BJ (cell line): ENCODE measurements at regions of chr10 and their contacts with region 1.

Region 1: GRCh38 chr10:29496341-29497162 is 138.2 kb downstream of the SVIL start:
- DNase-seq: no peak
- H3K4me3 ChIP-seq: no peak overlapping the region
- H3K27me3 ChIP-seq: no peaks in the 10 kb centered on the region
- CTCF ChIP-seq: peak; percentile 98

Region 2: DNA sequence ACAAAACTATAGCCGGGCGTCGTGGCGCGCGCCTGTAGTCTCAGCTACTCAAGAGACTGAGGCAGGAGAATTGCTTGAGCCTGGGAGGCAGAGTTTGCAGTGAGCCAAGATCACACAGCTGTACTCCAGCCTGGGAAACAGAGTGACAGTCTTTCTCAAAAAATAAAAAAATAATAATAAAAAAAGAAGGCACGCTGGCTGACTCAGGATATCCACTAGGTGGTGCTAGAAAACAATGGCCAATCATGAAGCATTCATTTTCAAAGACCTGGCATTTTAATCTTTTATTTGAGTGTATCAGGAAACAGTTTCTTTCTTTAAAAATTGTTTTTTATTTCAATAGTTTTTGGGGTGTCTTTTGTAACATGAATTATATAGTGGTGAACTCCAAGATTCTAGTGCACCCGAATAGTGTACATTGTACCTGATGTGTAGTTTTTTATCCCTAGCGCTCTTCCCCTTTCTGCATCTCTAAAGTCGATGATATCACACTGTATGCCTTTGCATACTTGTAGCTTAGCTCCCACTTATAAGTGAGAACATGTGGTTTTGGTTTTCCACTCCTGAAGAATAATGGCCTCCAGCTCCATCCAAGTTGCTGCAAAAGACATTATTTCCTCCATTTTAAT is 119.1 kb before region 1 on chr10:
- CTCF ChIA-PET with region 1: interaction called, 16 read pairs
- POLR2A ChIA-PET with region 1: no interaction called
- DNase-seq: no peak
- H3K4me3 ChIP-seq: no peak overlapping the region
- H3K27me3 ChIP-seq: peaks cover 4% of the 10 kb centered on the region
- CTCF ChIP-seq: peak; percentile 78

Region 3: DNA sequence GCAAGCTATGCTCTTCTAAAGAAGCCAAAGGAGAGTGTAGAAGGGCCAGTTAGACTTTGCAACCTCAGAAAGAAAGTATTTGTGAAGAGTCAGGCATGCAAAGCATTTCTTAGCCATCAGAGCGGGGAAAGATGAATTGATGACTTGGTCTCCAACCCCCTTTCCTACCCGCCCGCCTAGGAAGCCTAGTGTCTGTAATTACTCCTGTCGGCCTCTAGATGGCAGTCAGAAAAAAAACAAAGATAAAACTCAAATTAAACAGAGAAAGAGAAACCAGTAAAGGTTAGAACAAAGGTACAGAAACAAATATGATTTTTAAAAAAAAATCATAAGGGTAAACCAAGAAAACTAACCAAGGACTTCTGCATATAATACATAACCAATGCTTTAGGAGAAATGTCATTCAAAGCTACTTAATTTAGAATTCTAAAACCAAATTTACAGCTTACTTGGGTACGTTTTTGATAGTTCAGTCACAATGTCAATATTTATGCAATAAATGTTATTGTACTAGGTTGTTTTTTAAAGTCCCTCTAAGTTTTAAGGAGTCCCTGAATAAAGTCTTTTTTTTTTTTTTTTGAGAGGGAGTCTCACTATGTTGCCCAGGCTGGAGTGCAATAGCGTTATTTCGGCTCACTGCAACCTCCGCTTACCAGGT is 110.1 kb before region 1 on chr10:
- CTCF ChIA-PET with region 1: interaction called, 24 read pairs
- POLR2A ChIA-PET with region 1: no interaction called
- DNase-seq: no peak
- H3K4me3 ChIP-seq: no peak overlapping the region
- H3K27me3 ChIP-seq: peaks cover 11% of the 10 kb centered on the region
- CTCF ChIP-seq: peak; percentile 67

Region 4: DNA sequence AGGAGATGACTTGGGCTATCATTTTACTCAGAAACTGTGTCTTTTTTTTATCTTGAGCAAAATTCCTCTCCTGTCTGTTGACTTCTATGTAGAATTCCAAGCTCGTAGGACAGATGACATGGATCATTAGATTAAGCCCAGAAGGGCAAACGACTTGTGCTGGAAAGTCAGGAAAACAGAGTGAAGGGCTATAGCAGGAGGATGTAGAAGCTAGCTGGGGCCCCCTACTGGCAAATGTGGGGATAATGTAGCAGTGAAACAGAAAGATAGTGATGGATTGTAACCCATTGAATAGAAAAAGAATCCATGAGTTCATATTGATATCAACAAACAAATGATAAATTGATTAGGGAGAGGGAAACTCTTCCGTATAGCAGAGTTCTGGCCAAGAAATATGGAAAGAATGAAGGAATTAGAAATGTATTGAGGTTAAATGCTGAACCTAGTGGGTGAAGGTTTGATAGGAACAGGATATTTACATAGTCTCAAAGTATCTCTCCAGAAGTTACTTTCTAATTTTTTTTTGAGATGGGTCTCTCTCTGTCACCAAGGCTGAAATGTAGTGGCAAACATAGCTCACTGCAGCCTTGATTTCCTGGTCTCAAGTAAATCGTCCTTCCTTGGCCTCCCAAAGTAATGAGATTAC is 104.1 kb before region 1 on chr10:
- CTCF ChIA-PET with region 1: interaction called, 15 read pairs
- POLR2A ChIA-PET with region 1: no interaction called
- DNase-seq: no peak
- H3K4me3 ChIP-seq: no peak overlapping the region
- H3K27me3 ChIP-seq: peaks cover 24% of the 10 kb centered on the region
- CTCF ChIP-seq: peak; percentile 85

Region 5: GRCh38 chr10:29448125-29448524 is 48.4 kb before region 1 on chr10:
- CTCF ChIA-PET with region 1: interaction called, 17 read pairs
- POLR2A ChIA-PET with region 1: no interaction called
- DNase-seq: no peak
- H3K4me3 ChIP-seq: no peak overlapping the region
- H3K27me3 ChIP-seq: no peaks in the 10 kb centered on the region
- CTCF ChIP-seq: no peak

Region 6: DNA sequence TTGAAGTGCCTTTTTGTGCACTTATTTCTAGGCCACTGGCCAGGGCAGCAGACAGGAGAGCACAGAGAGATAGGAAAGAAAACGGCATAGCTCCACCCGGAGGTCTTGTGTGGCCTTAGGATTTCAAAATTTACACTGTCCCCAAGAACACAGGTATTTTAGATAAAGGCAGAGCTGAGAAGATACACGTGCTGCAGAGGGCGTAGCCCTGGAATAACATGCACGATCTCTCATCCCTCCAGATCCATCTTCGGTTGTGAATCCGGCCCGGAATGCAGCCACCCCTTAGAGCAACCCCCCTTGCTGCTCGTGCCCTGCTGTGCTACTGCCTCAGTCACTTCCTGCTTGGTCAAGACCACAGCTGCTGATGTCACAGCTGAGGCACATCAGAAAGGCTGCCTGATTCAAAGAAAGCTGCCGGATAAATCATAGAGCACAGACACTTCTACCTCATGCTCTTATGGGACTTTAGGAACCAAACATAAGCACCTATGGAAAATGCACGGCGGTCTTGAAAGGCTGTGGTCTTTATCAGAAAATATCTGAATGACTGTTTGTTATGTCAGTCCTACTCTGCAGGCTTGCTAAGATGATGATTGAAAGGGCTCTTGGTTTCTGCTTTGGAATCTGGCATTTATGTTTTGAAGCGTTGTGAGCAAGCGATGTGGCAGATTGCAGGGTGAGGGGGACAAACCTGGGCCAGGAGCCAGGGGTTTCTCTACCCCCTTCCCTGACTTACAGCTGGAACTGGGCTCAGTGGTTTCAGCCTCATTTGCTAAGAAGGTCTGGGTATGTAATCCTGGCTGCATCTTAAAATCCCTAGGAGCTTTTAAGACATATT is 13.7 kb before region 1 on chr10:
- CTCF ChIA-PET with region 1: interaction called, 13 read pairs
- POLR2A ChIA-PET with region 1: no interaction called
- DNase-seq: no peak
- H3K4me3 ChIP-seq: no peak overlapping the region
- H3K27me3 ChIP-seq: no peaks in the 10 kb centered on the region
- CTCF ChIP-seq: no peak

Region 7: GRCh38 chr10:29517352-29517923 is 20.9 kb after region 1 on chr10:
- CTCF ChIA-PET with region 1: interaction called, 23 read pairs
- POLR2A ChIA-PET with region 1: no interaction called
- DNase-seq: no peak
- H3K4me3 ChIP-seq: no peak overlapping the region
- H3K27me3 ChIP-seq: no peaks in the 10 kb centered on the region
- CTCF ChIP-seq: peak; percentile 72